HepG2 (cell line): ENCODE measurements at regions of chr14 and their contacts with region 1.

Region 1: GRCh38 chr14:100192672-100193416 is 33.4 kb upstream of the DEGS2 start:
- DNase-seq: peak; percentile 96
- ATAC-seq: peak; percentile 98
- H3K4me3 ChIP-seq: peak overlapping the region; percentile 64 to 80 (median 64)
- H3K27ac ChIP-seq: peak overlapping the region; percentile 76
- H3K4me1 ChIP-seq: peaks cover 45% of the 10 kb centered on the region
- H3K27me3 ChIP-seq: no peaks in the 10 kb centered on the region
- CTCF ChIP-seq: peak; percentile 93
- EP300 ChIP-seq: peak in 1 of 2 experiments; percentile 9; a peak in 1 of 4 replicates
- POLR2A ChIP-seq: peak; percentile 67 to 72
- RAD21 ChIP-seq: peak; percentile 97

Region 2: DNA sequence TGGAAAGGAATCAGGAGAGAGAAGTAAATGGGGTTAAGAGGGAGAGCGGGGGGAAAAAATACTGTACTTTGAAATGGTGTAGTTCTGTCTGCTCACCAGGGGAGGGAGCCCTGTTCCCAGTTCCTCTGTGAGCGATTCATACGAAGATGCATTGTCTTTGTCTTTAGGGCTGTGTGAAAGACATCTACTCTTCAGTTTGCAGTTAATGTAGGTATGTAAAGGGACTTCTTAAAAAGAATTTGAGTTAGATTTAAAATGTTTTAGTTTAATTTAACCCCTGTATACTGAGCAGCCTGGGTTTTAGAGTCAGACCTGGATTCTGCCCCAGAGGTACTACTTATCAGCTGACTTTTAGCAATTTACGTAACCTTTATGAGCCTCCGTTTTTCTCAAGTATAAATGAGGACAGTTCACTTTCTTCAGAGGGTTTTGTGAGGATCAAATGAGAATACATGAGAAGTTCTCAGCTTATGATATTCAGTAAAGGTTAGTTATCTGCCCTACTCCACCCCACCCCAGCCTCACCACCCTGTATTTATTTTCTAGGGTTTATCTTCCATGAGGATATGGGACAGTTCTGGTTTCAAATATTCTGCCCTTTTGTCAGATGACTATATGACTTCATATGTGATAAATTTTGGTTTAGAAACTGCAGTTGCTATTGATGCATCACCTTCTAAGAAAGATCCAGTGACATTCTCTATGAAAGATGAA is 210.2 kb before region 1 on chr14:
- CTCF ChIA-PET with region 1: interaction called, 8 read pairs
- POLR2A ChIA-PET with region 1: no interaction called
- in situ Hi-C with region 1: no loop called
- intact Hi-C with region 1: loop called (anchors 1 kb)
- DNase-seq: peak; percentile 39
- ATAC-seq: peak; percentile 80
- H3K4me3 ChIP-seq: no peak overlapping the region
- H3K27ac ChIP-seq: no peak overlapping the region
- H3K4me1 ChIP-seq: no peaks in the 10 kb centered on the region
- H3K27me3 ChIP-seq: no peaks in the 10 kb centered on the region
- CTCF ChIP-seq: peak; percentile 85
- EP300 ChIP-seq: no peak
- POLR2A ChIP-seq: no peak
- RAD21 ChIP-seq: peak; percentile 75

Region 3: GRCh38 chr14:100147181-100147631 is 45.6 kb before region 1 on chr14:
- CTCF ChIA-PET with region 1: no interaction called
- POLR2A ChIA-PET with region 1: interaction called, 10 read pairs
- in situ Hi-C with region 1: loop called (anchors 5 kb)
- intact Hi-C with region 1: no loop called
- DNase-seq: no peak
- ATAC-seq: no peak
- H3K4me3 ChIP-seq: no peak overlapping the region
- H3K27ac ChIP-seq: no peak overlapping the region
- H3K4me1 ChIP-seq: peaks cover 57% of the 10 kb centered on the region
- H3K27me3 ChIP-seq: peaks cover 0 to 1% of the 10 kb centered on the region in 2 experiments; a peak in 1 of 5 replicates
- CTCF ChIP-seq: no peak
- EP300 ChIP-seq: no peak
- POLR2A ChIP-seq: no peak
- RAD21 ChIP-seq: no peak

Region 4: GRCh38 chr14:100203949-100204834 is 11.3 kb after region 1 on chr14:
- CTCF ChIA-PET with region 1: no interaction called
- POLR2A ChIA-PET with region 1: interaction called, 36 read pairs
- in situ Hi-C with region 1: no loop called
- intact Hi-C with region 1: no loop called
- DNase-seq: peak; percentile 96
- ATAC-seq: peak; percentile 89
- H3K4me3 ChIP-seq: no peak overlapping the region; a peak in 1 of 6 replicates
- H3K27ac ChIP-seq: peak overlapping the region; percentile 59
- H3K4me1 ChIP-seq: peaks cover 50% of the 10 kb centered on the region
- H3K27me3 ChIP-seq: no peaks in the 10 kb centered on the region
- CTCF ChIP-seq: peak; percentile 11; the same call in 1 of the 2 replicates
- EP300 ChIP-seq: peak in 1 of 2 experiments; percentile 79; a peak in 2 of 4 replicates
- POLR2A ChIP-seq: no peak
- RAD21 ChIP-seq: no peak

Region 5: GRCh38 chr14:100221533-100222223 is 28.8 kb after region 1 on chr14:
- CTCF ChIA-PET with region 1: no interaction called
- POLR2A ChIA-PET with region 1: interaction called, 40 read pairs
- in situ Hi-C with region 1: no loop called
- intact Hi-C with region 1: no loop called
- DNase-seq: peak; percentile 77
- ATAC-seq: peak; percentile 84
- H3K4me3 ChIP-seq: peak overlapping the region; percentile 77 to 81 (median 77)
- H3K27ac ChIP-seq: peak overlapping the region; percentile 68
- H3K4me1 ChIP-seq: peaks cover 36% of the 10 kb centered on the region
- H3K27me3 ChIP-seq: no peaks in the 10 kb centered on the region; a peak in 1 of 5 replicates
- CTCF ChIP-seq: no peak
- EP300 ChIP-seq: no peak
- POLR2A ChIP-seq: peak; percentile 29 to 48; a peak in 1 of 4 replicates
- RAD21 ChIP-seq: no peak

Region 6: GRCh38 chr14:100246826-100247428 is 54.1 kb after region 1 on chr14:
- CTCF ChIA-PET with region 1: interaction called, 12 read pairs
- POLR2A ChIA-PET with region 1: interaction called, 3 read pairs
- in situ Hi-C with region 1: no loop called
- intact Hi-C with region 1: no loop called
- DNase-seq: peak; percentile 77
- ATAC-seq: peak; percentile 88
- H3K4me3 ChIP-seq: no peak overlapping the region
- H3K27ac ChIP-seq: peak overlapping the region; percentile 24
- H3K4me1 ChIP-seq: peaks cover 83% of the 10 kb centered on the region
- H3K27me3 ChIP-seq: no peaks in the 10 kb centered on the region
- CTCF ChIP-seq: peak; percentile 66
- EP300 ChIP-seq: no peak
- POLR2A ChIP-seq: no peak
- RAD21 ChIP-seq: 0 out of 2 replicates have a peak, but pooled peaks have one; percentile 19